ENCODE measurements at regions of chr1 and their contacts with region 1.

Region 1: GRCh38 chr1:185367218-185367617 is 50.2 kb upstream of the IVNS1ABP start:
- DNase-seq: no peak
- H3K4me3 Mint-ChIP-seq: no peak overlapping the region
- H3K27ac Mint-ChIP-seq: peak overlapping the region; percentile 70
- H3K4me1 Mint-ChIP-seq: peaks cover 17% of the 10 kb centered on the region
- H3K27me3 Mint-ChIP-seq: no peaks in the 10 kb centered on the region
- CTCF ChIP-seq: no peak

Region 2: DNA sequence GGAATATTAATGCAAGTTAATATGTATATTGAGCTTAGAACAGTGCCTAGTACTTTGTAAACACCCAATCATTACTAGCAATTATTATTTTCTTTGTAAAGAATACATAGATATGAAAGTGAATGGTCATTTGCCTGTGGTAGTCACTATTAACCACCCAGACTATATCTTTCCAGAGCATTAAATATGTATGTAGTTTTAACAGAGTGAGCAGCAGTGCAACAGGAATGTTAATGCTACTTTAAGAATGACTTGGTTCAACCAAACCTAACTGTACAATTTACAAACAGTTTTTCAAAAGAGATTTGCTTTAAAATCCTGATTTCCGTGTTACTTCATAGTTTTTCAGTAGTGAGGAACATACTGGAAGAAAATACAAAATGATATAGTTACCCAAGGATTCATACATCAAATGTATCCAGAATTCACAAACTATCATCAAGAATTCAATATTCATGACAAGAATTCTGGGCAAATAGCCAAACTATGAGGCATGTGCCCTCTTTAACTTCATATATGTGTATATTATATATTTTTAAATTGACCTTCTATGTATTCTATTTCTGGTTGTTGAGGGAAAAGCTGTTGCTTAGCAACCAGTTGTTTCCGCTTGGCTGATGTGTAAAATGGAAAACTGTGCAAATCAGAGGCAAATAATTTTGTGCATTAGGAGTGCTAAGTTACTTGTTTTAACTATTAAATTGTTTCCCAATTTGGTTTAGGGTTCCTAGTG is 15.3 kb before region 1 on chr1:
- CTCF ChIA-PET with region 1: interaction called, 5 read pairs
- POLR2A ChIA-PET with region 1: interaction called, 10 read pairs
- intact Hi-C with region 1: no loop called
- DNase-seq: no peak
- H3K4me3 Mint-ChIP-seq: no peak overlapping the region
- H3K27ac Mint-ChIP-seq: no peak overlapping the region
- H3K4me1 Mint-ChIP-seq: peaks cover 29% of the 10 kb centered on the region
- H3K27me3 Mint-ChIP-seq: no peaks in the 10 kb centered on the region
- CTCF ChIP-seq: no peak

Region 3: DNA sequence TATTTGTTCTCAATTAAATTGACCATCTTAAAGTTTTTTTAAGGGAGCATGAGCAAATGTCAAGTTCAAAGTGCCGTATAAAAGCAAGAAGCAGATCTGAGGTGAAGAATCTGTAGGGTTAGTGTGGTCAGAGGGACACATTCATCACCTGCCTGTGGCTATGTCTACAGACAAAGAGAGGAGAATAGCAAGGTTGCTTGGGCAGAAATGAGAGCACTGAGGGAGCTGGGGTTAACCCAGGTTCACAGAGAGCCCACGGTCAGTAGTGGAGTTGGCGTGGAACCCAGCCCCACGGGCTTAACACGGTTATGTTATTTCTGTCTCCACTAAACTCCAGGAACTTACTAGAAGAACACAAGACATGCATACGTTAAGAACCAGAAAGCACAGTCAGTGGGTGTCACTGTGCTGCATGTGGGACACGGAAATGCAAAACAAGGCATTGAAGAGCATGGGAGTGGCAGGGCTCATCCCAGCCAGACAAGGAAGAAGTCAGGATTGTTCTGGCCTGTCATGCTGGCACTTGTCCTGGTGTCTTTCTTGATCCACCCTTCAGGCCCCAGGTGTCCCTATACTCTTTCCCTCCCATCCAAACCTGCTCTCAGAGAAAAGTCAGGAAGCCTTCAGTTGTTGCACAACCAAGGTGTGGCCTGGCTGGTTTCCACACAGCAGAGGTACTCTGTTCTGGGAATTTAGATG is 45.3 kb after region 1 on chr1:
- CTCF ChIA-PET with region 1: interaction called, 3 read pairs
- POLR2A ChIA-PET with region 1: interaction called, 10 read pairs
- intact Hi-C with region 1: no loop called
- DNase-seq: peak; percentile 93
- H3K4me3 Mint-ChIP-seq: no peak overlapping the region
- H3K27ac Mint-ChIP-seq: peak overlapping the region; percentile 14
- H3K4me1 Mint-ChIP-seq: peaks cover 32% of the 10 kb centered on the region
- H3K27me3 Mint-ChIP-seq: no peaks in the 10 kb centered on the region
- CTCF ChIP-seq: no peak

Region 4: DNA sequence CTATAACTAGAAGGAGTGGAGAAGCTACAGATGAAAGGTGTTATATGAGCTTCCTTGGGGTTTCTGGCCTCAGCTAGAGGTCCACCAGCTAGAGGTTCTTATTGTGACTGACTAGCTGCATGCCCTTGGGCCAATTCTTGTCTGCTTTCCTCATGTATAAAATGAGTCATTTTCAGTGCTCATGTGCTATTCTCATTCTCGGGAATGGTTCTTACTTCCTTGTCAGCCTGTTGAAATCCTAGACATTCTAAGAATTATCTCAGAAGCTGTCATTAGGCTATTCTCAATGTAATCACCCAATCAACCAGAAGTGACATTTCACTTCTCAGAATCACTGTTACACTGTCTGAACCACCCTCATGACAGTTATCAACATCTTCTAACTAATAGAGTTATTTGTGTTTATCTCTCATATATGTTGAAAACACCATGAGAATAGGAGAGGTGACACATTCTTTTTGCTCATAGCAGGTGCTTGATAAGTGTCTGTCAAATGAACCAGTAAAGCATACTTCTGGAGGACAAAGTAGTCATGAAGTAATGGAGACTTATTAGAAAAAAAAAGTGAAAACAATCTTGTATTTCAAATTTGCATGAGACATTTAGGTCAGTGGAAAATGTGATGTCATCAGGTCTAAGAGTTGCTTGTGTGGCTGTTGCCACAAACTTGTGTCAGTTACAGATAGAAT is 72.7 kb after region 1 on chr1:
- CTCF ChIA-PET with region 1: no interaction called
- POLR2A ChIA-PET with region 1: no interaction called
- intact Hi-C with region 1: loop called (anchors 5 kb)
- DNase-seq: peak; percentile 95
- H3K4me3 Mint-ChIP-seq: no peak overlapping the region
- H3K27ac Mint-ChIP-seq: no peak overlapping the region
- H3K4me1 Mint-ChIP-seq: peaks cover 10% of the 10 kb centered on the region
- H3K27me3 Mint-ChIP-seq: no peaks in the 10 kb centered on the region
- CTCF ChIP-seq: no peak